CD4-positive, alpha-beta memory T cell (primary cell): ENCODE measurements at regions of chr9 and their contacts with region 1.

Region 1: DNA sequence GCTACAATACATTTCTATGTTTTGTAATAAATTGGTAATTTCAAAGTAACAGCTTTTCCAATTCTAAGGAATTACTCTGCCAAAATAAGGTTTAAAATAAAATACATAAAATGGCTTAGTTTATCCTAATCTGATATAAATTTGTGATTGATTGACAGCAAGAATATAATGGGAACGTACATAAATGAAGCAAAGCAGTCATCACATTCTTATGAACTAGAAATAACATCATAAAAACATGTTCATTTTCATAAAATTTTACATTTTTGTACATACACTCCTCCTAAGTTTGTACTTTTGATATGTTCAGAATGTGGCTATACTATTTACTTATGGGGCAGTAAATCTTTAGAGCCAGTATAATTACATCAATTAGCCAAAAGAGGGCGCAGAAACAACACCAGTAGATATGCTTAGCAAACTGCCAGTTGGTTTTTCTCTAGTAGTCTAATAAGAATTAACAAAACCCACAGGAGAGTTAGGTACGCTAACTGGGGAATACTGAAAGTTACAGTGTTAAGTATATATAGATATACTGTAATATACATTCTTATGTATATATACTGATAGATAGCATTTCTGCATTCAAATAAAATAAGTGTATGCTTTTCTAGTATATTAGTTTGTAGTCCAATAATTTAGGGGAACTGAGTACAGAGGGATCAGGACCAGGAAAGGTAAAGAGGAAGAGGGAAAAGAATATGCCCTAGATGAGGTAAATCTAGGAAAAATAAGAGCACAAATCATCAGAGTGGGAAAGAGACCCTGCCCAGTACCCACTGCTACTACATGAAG is 76.8 kb downstream of the ZDHHC21 start:
- DNase-seq: peak in 4 of 5 donors; percentile 19 to 42 (median 32)
- H3K4me3 ChIP-seq: no peak overlapping the region
- H3K4me3 Mint-ChIP-seq: no peak overlapping the region
- H3K27ac ChIP-seq: no peak overlapping the region
- H3K27ac Mint-ChIP-seq: no peak overlapping the region
- H3K4me1 ChIP-seq: no peaks in the 10 kb centered on the region
- H3K4me1 Mint-ChIP-seq: no peaks in the 10 kb centered on the region
- H3K27me3 ChIP-seq: no peaks in the 10 kb centered on the region
- H3K27me3 Mint-ChIP-seq: no peaks in the 10 kb centered on the region

Region 2: GRCh38 chr9:14670718-14671117 is 54.3 kb after region 1 on chr9:
- CTCF ChIA-PET with region 1: no interaction called
- POLR2A ChIA-PET with region 1: no interaction called
- intact Hi-C with region 1: loop called (anchors 5 kb)
- DNase-seq: no peak
- H3K4me3 ChIP-seq: no peak overlapping the region
- H3K4me3 Mint-ChIP-seq: no peak overlapping the region
- H3K27ac ChIP-seq: no peak overlapping the region
- H3K27ac Mint-ChIP-seq: peak overlapping the region in 1 of 7 donors; percentile 9
- H3K4me1 ChIP-seq: no peaks in the 10 kb centered on the region
- H3K4me1 Mint-ChIP-seq: peaks cover 0 to 11% (median 7%) of the 10 kb centered on the region in 4 donors
- H3K27me3 ChIP-seq: no peaks in the 10 kb centered on the region
- H3K27me3 Mint-ChIP-seq: no peaks in the 10 kb centered on the region

Region 3: GRCh38 chr9:14824481-14824880 is 208.1 kb after region 1 on chr9:
- CTCF ChIA-PET with region 1: no interaction called
- POLR2A ChIA-PET with region 1: no interaction called
- intact Hi-C with region 1: no loop called
- DNase-seq: no peak
- H3K4me3 ChIP-seq: no peak overlapping the region
- H3K4me3 Mint-ChIP-seq: no peak overlapping the region
- H3K27ac ChIP-seq: no peak overlapping the region
- H3K27ac Mint-ChIP-seq: no peak overlapping the region
- H3K4me1 ChIP-seq: no peaks in the 10 kb centered on the region
- H3K4me1 Mint-ChIP-seq: peaks cover 0 to 1% (median 0%) of the 10 kb centered on the region in 4 donors
- H3K27me3 ChIP-seq: no peaks in the 10 kb centered on the region
- H3K27me3 Mint-ChIP-seq: peaks cover 3 to 4% of the 10 kb centered on the region in 2 donors

Region 4: DNA sequence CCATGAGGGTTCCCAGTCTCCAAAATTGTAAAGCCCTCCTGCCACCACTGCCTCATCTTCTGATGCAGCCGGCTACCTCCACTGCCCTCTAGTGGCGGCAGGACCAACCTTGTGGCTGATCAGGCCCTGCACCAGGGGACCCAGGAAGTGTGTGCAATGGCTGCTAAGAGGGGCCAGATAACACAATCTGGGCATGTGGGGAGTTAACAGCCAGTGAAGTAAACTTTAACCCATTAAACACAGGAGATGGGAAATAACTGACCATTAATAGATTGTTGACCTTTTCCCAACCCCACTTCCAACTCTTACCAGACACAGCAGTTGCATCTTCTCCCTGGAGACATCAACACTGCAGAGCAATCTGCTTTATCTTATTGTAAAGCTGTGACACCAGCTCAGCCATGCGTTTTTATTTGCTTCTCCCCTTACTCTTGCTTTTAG is 230.5 kb after region 1 on chr9:
- CTCF ChIA-PET with region 1: no interaction called
- POLR2A ChIA-PET with region 1: no interaction called
- intact Hi-C with region 1: no loop called
- DNase-seq: peak in 4 of 5 donors; percentile 8 to 33 (median 19)
- H3K4me3 ChIP-seq: no peak overlapping the region
- H3K4me3 Mint-ChIP-seq: no peak overlapping the region
- H3K27ac ChIP-seq: no peak overlapping the region
- H3K27ac Mint-ChIP-seq: no peak overlapping the region
- H3K4me1 ChIP-seq: no peaks in the 10 kb centered on the region
- H3K4me1 Mint-ChIP-seq: no peaks in the 10 kb centered on the region
- H3K27me3 ChIP-seq: peaks cover 3% of the 10 kb centered on the region
- H3K27me3 Mint-ChIP-seq: peaks cover 5 to 11% of the 10 kb centered on the region in 2 donors

Region 5: GRCh38 chr9:15142878-15143534 is 526.6 kb after region 1 on chr9:
- CTCF ChIA-PET with region 1: no interaction called
- POLR2A ChIA-PET with region 1: no interaction called
- intact Hi-C with region 1: loop called (anchors 2 kb)
- DNase-seq: peak in 4 of 5 donors; percentile 15 to 35 (median 26)
- H3K4me3 ChIP-seq: no peak overlapping the region
- H3K4me3 Mint-ChIP-seq: no peak overlapping the region
- H3K27ac ChIP-seq: no peak overlapping the region
- H3K27ac Mint-ChIP-seq: no peak overlapping the region
- H3K4me1 ChIP-seq: no peaks in the 10 kb centered on the region
- H3K4me1 Mint-ChIP-seq: peaks cover 0 to 8% (median 3%) of the 10 kb centered on the region in 4 donors
- H3K27me3 ChIP-seq: no peaks in the 10 kb centered on the region
- H3K27me3 Mint-ChIP-seq: peaks cover 0 to 1% of the 10 kb centered on the region in 2 donors